Sigmoid colon (tissue), 7 donors: ENCODE measurements at regions of chr5 and their contacts with region 1.

Region 1: DNA sequence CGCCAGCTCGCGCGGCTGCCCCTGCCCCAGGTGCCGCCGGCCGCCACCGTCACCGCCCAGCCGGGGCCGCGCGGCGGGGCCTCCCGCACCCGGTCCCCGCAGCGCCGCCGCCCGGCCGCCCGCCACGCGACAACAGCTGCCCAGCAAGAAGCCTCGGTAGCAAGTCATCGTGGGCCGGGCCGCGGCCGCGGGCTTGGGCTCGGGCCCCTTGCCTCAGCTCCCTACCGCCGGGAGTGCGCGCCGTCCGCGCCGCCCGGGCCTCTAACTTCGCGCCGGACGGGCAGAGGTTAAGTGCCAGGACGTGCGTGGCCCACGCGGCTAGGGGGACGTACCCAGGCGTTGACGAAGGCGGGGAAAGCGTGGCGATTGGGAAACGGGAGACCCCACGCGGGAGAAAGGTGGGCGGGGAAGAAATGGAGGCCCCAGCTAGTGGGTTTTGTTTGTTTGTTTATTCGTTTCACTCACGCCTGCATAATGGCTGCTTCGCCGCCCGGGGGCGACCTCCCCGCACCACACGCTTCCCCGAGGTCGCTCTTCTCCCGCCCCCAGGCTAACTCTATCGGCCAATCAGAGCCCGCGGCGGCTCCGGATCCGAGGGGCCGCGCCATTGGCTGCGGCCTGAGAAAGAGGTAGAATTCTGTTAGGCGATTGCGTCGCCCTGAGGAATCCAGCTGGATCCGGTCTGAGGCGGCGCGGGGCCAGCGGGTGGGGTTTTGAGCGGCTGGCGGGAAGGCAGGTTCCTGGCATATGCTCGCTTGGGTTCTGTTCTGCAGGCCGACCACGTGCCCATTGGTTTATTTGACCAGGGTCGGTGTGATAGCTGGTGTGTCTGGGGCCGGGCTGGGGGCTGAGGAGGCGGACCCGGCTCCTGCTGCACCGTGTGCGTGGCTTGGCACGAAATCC is at the start of gene NADK2:
- DNase-seq: peak; percentile 98
- H3K4me3 ChIP-seq: peak within 1 kb of the TSS; percentile 90 to 98 (median 94)
- H3K27ac ChIP-seq: peak within 1 kb of the TSS; percentile 99 to 100 (median 99)
- H3K4me1 ChIP-seq: peaks cover 0 to 47% (median 37%) of the 10 kb centered on the region in 4 donors
- H3K27me3 ChIP-seq: no peaks in the 10 kb centered on the region
- CTCF ChIP-seq: peak; percentile 49 to 61 (median 54)
- EP300 ChIP-seq: peak in 2 of 4 donors; percentile 24 to 39
- POLR2A ChIP-seq: peak; percentile 51 to 54
- total RNA-seq, gene NADK2: 39.6 to 57.9 (median 43.1) TPM

Region 2: GRCh38 chr5:36041538-36041846 is 200.4 kb before region 1 on chr5:
- intact Hi-C with region 1: no loop called
- DNase-seq: no peak
- H3K4me3 ChIP-seq: no peak overlapping the region
- H3K27ac ChIP-seq: no peak overlapping the region
- H3K4me1 ChIP-seq: no peaks in the 10 kb centered on the region
- H3K27me3 ChIP-seq: no peaks in the 10 kb centered on the region
- CTCF ChIP-seq: no peak
- EP300 ChIP-seq: no peak
- POLR2A ChIP-seq: no peak

Region 3: GRCh38 chr5:36151434-36152323 is 90.2 kb before region 1 on chr5 and contains the starts of genes LMBRD2 and SKP2:
- intact Hi-C with region 1: loop called (anchors 5 kb)
- DNase-seq: peak; percentile 98
- H3K4me3 ChIP-seq: peak within 1 kb of the TSS; percentile 87 to 99 (median 93)
- H3K27ac ChIP-seq: peak within 1 kb of the TSS; percentile 88 to 93 (median 88)
- H3K4me1 ChIP-seq: peaks cover 0 to 37% (median 18%) of the 10 kb centered on the region in 4 donors
- H3K27me3 ChIP-seq: no peaks in the 10 kb centered on the region
- CTCF ChIP-seq: no peak
- EP300 ChIP-seq: no peak
- POLR2A ChIP-seq: peak; percentile 19 to 26
- total RNA-seq, gene LMBRD2: 9.8 to 16.1 (median 13.4) TPM
- total RNA-seq, gene SKP2: 6.9 to 9.6 (median 8.6) TPM

Region 4: GRCh38 chr5:36870399-36871040 is 628.6 kb after region 1 on chr5:
- intact Hi-C with region 1: loop called (anchors 5 kb)
- DNase-seq: no peak
- H3K4me3 ChIP-seq: no peak overlapping the region
- H3K27ac ChIP-seq: no peak overlapping the region
- H3K4me1 ChIP-seq: peaks cover 0 to 21% (median 17%) of the 10 kb centered on the region in 4 donors
- H3K27me3 ChIP-seq: no peaks in the 10 kb centered on the region
- CTCF ChIP-seq: peak in 3 of 4 experiments; percentile 41 to 61 (median 58)
- EP300 ChIP-seq: no peak
- POLR2A ChIP-seq: no peak